Activated CD4-positive, alpha-beta memory T cell treated with anti-CD3 and anti-CD28 coated beads for 36 hours (primary cell): ENCODE measurements at regions of chr1 and their contacts with region 1.

Region 1: DNA sequence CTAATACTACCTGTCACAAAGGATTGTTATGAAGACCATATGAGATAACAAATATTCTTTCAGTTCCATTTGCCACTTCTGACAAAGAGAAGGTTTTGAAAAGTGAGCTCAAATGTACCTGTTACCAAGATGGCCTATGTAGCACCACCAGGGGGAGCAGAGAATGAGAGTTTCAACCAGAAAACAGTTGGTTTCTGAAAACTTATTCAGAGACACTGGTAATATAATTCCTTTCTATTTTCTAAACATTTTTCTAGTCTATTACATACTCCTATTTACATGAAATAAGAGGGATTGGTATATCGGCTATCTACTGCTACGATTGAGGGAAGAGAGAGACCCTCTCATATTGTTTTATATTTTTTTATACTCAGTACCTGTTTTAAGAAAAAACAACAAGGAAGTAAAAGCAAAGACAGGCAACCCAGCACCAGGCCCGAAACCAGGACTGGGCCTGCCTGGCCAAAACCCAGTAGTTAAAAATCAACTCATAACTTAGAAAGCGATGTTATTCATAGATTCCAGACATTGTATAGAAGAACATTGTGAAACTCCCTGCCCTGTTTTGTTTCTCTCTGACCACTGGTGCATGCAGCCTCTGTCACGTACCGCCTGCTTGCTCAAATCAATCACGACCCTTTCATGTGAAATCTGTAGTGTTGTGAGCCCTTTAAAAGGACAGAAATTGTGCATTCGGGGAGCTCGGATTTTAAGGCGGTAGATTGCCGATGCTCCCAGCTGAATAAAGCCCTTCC is 48.3 kb downstream of the IL23R start:
- DNase-seq: peak; percentile 62
- H3K4me3 Mint-ChIP-seq: no peak overlapping the region
- H3K27ac Mint-ChIP-seq: no peak overlapping the region
- H3K4me1 Mint-ChIP-seq: peaks cover 46% of the 10 kb centered on the region
- H3K27me3 Mint-ChIP-seq: no peaks in the 10 kb centered on the region

Region 2: GRCh38 chr1:67085326-67085725 is 129.3 kb before region 1 on chr1:
- CTCF ChIA-PET with region 1: no interaction called
- POLR2A ChIA-PET with region 1: no interaction called
- intact Hi-C with region 1: no loop called
- DNase-seq: no peak
- H3K4me3 Mint-ChIP-seq: no peak overlapping the region
- H3K27ac Mint-ChIP-seq: no peak overlapping the region
- H3K4me1 Mint-ChIP-seq: no peaks in the 10 kb centered on the region
- H3K27me3 Mint-ChIP-seq: no peaks in the 10 kb centered on the region

Region 3: DNA sequence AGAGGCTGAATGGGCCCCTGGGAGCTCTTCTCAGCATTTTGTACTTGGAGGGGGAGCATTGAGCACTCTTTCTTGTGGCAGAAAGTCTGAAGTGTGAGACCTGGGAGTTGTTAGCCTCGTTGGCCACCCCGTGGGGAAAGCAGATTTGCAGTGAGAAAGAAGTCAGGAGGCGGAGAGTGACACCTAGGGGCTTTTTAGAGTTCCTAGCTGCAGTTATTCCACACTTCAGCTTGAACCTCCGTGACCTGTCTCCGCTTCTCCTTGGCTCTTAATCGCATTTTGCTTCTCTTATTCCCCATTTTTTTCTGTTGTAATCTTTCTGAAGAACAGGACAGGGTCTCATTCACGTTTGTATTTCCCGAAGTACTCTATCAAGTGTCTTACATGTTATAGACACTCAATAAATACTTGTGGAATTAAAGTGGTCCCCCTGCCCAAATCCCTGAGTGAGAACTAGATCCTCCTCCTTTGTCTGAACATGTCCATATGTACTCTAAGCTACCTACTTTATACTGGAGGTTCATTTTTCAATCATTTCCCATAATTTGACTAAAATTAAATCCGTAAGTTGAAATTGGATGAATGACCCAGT is 65.3 kb before region 1 on chr1:
- CTCF ChIA-PET with region 1: interaction called, 173 read pairs
- POLR2A ChIA-PET with region 1: interaction called, 3 read pairs
- intact Hi-C with region 1: loop called (anchors 1 kb)
- DNase-seq: peak; percentile 77
- H3K4me3 Mint-ChIP-seq: no peak overlapping the region
- H3K27ac Mint-ChIP-seq: no peak overlapping the region
- H3K4me1 Mint-ChIP-seq: peaks cover 28% of the 10 kb centered on the region
- H3K27me3 Mint-ChIP-seq: peaks cover 10% of the 10 kb centered on the region

Region 4: GRCh38 chr1:67227196-67227595 is 12.6 kb after region 1 on chr1:
- CTCF ChIA-PET with region 1: interaction called, 43 read pairs
- POLR2A ChIA-PET with region 1: interaction called, 3 read pairs
- intact Hi-C with region 1: no loop called
- DNase-seq: no peak
- H3K4me3 Mint-ChIP-seq: no peak overlapping the region
- H3K27ac Mint-ChIP-seq: no peak overlapping the region
- H3K4me1 Mint-ChIP-seq: peaks cover 6% of the 10 kb centered on the region
- H3K27me3 Mint-ChIP-seq: peaks cover 1% of the 10 kb centered on the region

Region 5: GRCh38 chr1:67314696-67315095 is 100.1 kb after region 1 on chr1:
- CTCF ChIA-PET with region 1: interaction called, 12 read pairs
- POLR2A ChIA-PET with region 1: no interaction called
- intact Hi-C with region 1: no loop called
- DNase-seq: peak; percentile 53
- H3K4me3 Mint-ChIP-seq: peak overlapping the region; percentile 56
- H3K27ac Mint-ChIP-seq: peak overlapping the region; percentile 96
- H3K4me1 Mint-ChIP-seq: peaks cover 48% of the 10 kb centered on the region
- H3K27me3 Mint-ChIP-seq: no peaks in the 10 kb centered on the region

Region 6: DNA sequence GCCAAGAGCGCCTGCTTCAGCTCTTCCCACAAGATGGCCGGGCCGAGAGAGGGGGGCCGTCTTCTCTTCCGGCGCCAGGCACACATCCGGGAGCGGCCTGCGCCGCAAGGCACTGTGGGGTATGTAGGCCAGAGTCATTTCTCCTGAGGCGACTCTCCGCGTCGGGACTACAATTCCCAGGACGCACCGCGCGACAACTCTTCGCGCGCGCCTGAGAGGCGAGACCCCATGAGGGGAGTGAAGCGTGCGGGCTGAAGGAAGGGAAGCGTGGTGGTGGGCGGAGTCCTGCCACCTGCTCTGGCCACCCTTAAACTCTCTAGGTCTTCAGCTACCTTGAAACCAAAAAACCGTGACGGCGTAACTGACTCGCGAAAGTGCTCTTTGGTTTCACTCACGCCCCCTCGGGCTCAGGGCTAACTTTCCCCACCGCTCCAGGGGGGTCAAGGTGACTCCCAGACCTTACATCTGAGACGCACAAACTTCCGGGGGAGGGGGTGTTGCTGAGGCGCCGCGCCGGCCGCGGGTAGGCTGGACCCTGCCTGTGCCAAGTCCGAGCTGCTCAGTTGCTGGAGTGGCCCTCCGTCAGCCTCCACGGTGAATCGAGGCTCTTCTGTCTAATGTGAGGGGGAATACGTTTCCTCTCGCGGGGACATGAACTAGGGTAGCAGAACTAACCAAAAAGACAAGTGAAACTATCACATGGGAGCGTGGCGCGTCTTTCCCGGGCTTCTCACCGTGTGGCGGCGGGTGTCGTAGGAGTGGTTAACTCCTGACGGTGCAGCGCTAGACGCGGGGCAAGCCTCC is 216.0 kb after region 1 on chr1 and contains the start of gene SERBP1:
- CTCF ChIA-PET with region 1: interaction called, 16 read pairs
- POLR2A ChIA-PET with region 1: interaction called, 3 read pairs
- intact Hi-C with region 1: no loop called
- DNase-seq: peak; percentile 97
- H3K4me3 Mint-ChIP-seq: peak within 1 kb of the TSS; percentile 83
- H3K27ac Mint-ChIP-seq: peak within 1 kb of the TSS; percentile 97
- H3K4me1 Mint-ChIP-seq: peaks cover 50% of the 10 kb centered on the region
- H3K27me3 Mint-ChIP-seq: no peaks in the 10 kb centered on the region
- total RNA-seq, gene SERBP1: 388 to 398 TPM

Region 7: GRCh38 chr1:67460676-67461500 is 246.3 kb after region 1 on chr1:
- CTCF ChIA-PET with region 1: no interaction called
- POLR2A ChIA-PET with region 1: no interaction called
- intact Hi-C with region 1: no loop called
- DNase-seq: no peak
- H3K4me3 Mint-ChIP-seq: no peak overlapping the region
- H3K27ac Mint-ChIP-seq: no peak overlapping the region
- H3K4me1 Mint-ChIP-seq: no peaks in the 10 kb centered on the region
- H3K27me3 Mint-ChIP-seq: no peaks in the 10 kb centered on the region